Mammary epithelial cell (primary cell): ENCODE measurements at regions of chr12 and their contacts with region 1.

Region 1: GRCh38 chr12:8078398-8078797 is 3.7 kb upstream of the NECAP1 start:
- DNase-seq: peak; percentile 37
- H3K4me3 ChIP-seq: no peak overlapping the region
- H3K27ac ChIP-seq: no peak overlapping the region
- H3K4me1 ChIP-seq: peaks cover 24% of the 10 kb centered on the region
- H3K27me3 ChIP-seq: no peaks in the 10 kb centered on the region
- CTCF ChIP-seq: peak; percentile 17 to 35

Region 2: GRCh38 chr12:7832059-7832696 is 246.2 kb before region 1 on chr12:
- CTCF ChIA-PET with region 1: no interaction called
- dilution Hi-C with region 1: no loop called
- in situ Hi-C with region 1: no loop called
- intact Hi-C with region 1: loop called (anchors 2 kb)
- DNase-seq: peak; percentile 22
- H3K4me3 ChIP-seq: no peak overlapping the region
- H3K27ac ChIP-seq: no peak overlapping the region
- H3K4me1 ChIP-seq: no peaks in the 10 kb centered on the region
- H3K27me3 ChIP-seq: no peaks in the 10 kb centered on the region
- CTCF ChIP-seq: peak; percentile 56 to 69

Region 3: DNA sequence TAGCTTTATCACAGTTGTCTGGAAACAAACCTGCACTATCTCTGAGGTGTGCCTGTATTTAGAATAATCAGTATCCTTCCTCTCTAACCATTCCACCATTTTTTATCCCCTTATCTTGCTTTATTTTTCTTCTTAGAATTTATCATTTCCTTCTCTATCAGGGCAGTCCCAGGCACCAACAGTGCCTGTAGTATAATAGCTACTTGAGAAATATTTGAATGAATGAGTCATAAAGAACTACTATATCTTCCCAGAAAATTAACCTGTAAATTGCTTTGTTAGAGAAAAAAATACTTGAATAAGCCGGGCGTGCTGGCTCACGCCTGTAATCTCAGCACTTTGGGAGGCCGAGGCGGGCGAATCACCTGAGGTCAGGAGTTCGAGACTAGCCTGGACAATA is 67.1 kb before region 1 on chr12:
- CTCF ChIA-PET with region 1: no interaction called
- dilution Hi-C with region 1: loop called (anchors 5 kb)
- in situ Hi-C with region 1: no loop called
- intact Hi-C with region 1: no loop called
- DNase-seq: peak; percentile 56
- H3K4me3 ChIP-seq: no peak overlapping the region
- H3K27ac ChIP-seq: no peak overlapping the region
- H3K4me1 ChIP-seq: no peaks in the 10 kb centered on the region
- H3K27me3 ChIP-seq: peaks cover 2% of the 10 kb centered on the region
- CTCF ChIP-seq: no peak

Region 4: GRCh38 chr12:8038659-8039114 is 39.7 kb before region 1 on chr12:
- CTCF ChIA-PET with region 1: no interaction called
- dilution Hi-C with region 1: no loop called
- in situ Hi-C with region 1: no loop called
- intact Hi-C with region 1: loop called (anchors 5 kb)
- DNase-seq: peak; percentile 64
- H3K4me3 ChIP-seq: peak overlapping the region in 2 of 3 experiments; percentile 4 to 41
- H3K27ac ChIP-seq: peak overlapping the region; percentile 15
- H3K4me1 ChIP-seq: peaks cover 42% of the 10 kb centered on the region
- H3K27me3 ChIP-seq: no peaks in the 10 kb centered on the region
- CTCF ChIP-seq: no peak

Region 5: DNA sequence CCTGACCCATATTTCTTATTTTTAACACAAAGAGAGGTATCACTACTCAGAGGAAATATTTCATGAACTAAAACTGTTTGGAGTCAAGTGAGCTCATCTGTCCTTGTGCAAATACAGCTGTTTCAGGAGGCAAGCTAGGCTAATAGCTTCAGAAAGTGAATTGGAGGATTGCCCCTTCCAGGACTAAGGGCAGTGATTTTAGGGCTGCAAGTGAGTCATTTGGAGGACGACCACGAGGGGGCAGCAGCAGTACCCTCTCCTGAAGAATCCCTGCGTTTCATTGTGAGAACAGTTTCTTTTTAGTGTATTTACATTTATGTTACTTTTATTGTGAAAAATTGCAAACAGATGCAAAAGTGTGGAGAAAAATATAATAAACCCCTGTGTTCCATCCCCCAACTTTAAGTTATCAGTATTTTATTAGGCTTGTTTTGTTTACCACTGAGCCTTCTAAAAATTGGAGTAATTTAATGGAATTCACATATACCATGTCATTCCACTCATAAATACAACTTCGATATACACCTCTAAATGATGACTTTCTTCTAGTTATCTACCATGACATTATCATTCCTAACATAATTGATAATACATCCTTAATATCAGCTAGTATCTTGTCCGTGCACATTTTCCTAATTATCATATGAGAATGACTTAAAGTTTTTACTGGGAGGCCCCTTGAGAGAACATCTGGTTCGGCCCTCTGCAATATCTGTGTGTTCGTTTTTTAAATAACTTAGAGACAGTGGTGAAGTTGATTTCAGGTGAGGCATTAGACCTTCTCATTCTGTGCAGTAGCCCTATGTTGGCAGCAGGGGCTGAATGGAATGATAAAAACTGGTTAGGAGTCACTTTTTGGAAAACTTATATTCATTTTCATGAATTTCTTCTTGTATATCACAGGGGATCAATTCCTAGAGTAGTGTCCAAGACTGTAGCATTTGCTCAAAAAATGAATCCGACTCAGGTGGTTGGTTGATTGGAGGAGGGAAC is 32.1 kb before region 1 on chr12:
- CTCF ChIA-PET with region 1: interaction called, 5 read pairs
- dilution Hi-C with region 1: no loop called
- in situ Hi-C with region 1: no loop called
- intact Hi-C with region 1: loop called (anchors 1 kb)
- DNase-seq: peak; percentile 43
- H3K4me3 ChIP-seq: no peak overlapping the region
- H3K27ac ChIP-seq: no peak overlapping the region
- H3K4me1 ChIP-seq: no peaks in the 10 kb centered on the region
- H3K27me3 ChIP-seq: no peaks in the 10 kb centered on the region
- CTCF ChIP-seq: peak; percentile 89 to 91